Activated naive CD4-positive, alpha-beta T cell treated with anti-CD3 and anti-CD28 coated beads, Interleukin-2, amount 10 ng/mL, durations not matched to agents 7 days and 5 days (primary cell): ENCODE measurements at regions of chr1 and their contacts with region 1.

Region 1: DNA sequence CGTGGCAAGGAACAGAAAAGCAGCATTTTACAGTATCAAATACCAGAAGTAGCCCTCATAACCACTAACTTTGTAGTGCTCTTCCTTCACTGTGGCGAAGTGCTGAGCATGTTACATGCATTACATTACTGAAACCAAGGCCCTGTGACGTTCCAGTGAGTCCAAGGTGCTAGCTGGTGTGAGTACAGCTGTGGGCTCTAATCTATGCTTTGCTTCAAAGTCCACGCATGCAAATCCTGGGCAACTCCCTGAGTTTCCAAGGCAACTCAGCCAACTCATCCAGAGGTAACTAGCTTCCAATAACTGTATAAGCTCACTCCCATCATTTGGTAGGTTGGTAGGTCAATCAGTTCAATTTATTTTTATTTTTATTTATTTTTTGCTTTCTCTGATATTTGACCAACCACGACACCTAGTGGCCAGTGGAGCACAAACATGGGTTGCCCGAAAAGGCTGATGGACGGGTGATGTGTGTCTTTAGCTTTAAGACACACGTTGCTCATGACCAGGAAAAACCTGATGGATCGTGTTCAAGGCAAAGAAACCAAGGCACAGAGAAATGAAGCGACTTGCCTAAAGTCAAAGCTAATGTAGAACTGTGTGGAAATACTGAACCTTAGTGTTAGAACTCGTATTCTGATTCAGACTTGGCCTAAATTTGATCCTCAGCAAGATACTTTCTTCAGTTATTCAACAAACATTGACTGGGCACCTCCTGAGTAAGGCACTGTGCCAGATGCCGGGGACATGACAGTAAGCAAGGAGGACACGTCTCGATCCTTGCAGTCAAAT is 73.0 kb downstream of the GNG12 start:
- DNase-seq: peak; percentile 69
- H3K4me3 Mint-ChIP-seq: no peak overlapping the region
- H3K27ac Mint-ChIP-seq: no peak overlapping the region
- H3K4me1 Mint-ChIP-seq: no peaks in the 10 kb centered on the region
- H3K27me3 Mint-ChIP-seq: peaks cover 23% of the 10 kb centered on the region

Region 2: DNA sequence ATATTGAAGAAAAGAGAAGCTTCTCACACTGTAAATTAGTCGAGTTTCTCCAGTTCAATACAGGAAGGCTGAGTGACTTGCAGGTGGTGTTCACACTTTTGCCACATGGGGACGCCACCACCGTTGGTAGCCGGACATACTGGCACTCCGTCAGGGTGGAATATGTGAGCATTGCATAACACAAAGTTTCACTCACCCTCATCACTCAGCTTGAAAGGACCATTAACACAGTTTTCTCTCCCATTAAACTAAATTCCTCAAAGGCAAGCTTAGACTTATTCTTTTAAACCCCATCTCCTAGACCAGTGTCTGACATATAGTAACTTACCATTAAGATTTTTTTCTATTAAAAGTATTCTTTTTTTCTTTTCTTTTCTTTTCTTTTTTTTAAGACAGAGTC is 224.8 kb before region 1 on chr1:
- CTCF ChIA-PET with region 1: interaction called, 86 read pairs
- DNase-seq: peak; percentile 66
- H3K4me3 Mint-ChIP-seq: no peak overlapping the region
- H3K27ac Mint-ChIP-seq: no peak overlapping the region
- H3K4me1 Mint-ChIP-seq: no peaks in the 10 kb centered on the region
- H3K27me3 Mint-ChIP-seq: peaks cover 6% of the 10 kb centered on the region

Region 3: GRCh38 chr1:67561704-67562113 is 198.5 kb before region 1 on chr1:
- CTCF ChIA-PET with region 1: interaction called, 158 read pairs
- DNase-seq: peak; percentile 91
- H3K4me3 Mint-ChIP-seq: no peak overlapping the region
- H3K27ac Mint-ChIP-seq: no peak overlapping the region
- H3K4me1 Mint-ChIP-seq: no peaks in the 10 kb centered on the region
- H3K27me3 Mint-ChIP-seq: peaks cover 14% of the 10 kb centered on the region

Region 4: GRCh38 chr1:67570473-67571143 is 189.6 kb before region 1 on chr1:
- CTCF ChIA-PET with region 1: interaction called, 20 read pairs
- DNase-seq: no peak
- H3K4me3 Mint-ChIP-seq: no peak overlapping the region
- H3K27ac Mint-ChIP-seq: no peak overlapping the region
- H3K4me1 Mint-ChIP-seq: no peaks in the 10 kb centered on the region
- H3K27me3 Mint-ChIP-seq: peaks cover 7% of the 10 kb centered on the region

Region 5: DNA sequence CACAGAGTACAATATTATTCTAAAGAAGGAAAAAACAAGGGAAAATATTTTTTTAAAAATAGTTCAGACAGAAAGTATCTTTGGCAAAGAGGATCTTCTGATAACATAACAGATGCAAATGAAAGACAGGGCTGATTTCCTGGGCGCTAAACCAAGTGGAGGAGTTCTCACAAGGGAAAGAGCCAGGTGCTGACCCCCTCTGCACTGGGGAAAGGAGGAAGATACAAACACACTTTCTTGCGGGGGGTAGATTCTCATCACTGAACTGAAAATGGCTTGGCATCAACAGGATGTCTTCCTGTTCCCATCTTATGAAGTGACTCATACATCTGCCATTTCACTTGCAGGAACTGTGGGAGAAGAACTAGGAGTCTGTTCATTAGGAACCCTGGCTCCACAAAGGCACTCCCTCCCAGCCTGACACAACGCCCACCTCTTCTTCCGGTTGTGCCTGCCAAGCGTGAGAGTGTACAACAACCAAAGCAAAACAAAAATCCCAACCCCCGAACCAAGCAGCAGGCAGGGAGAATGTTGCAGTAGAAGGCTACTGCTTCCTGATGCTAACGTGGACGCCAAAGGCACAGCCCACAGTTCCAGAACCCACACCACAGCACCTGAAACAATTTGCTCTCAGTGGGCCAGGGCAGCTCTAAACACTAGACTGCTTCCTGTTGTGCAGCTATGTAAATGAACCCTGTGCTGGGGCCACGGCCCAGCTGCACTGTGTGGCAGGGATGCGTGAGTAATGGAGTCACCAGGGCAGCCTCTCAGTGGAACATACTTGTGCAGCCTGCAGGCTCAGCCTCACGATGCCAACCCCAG is 24.2 kb before region 1 on chr1:
- CTCF ChIA-PET with region 1: interaction called, 16 read pairs
- DNase-seq: peak; percentile 68
- H3K4me3 Mint-ChIP-seq: peak overlapping the region; percentile 51
- H3K27ac Mint-ChIP-seq: peak overlapping the region; percentile 87
- H3K4me1 Mint-ChIP-seq: peaks cover 25% of the 10 kb centered on the region
- H3K27me3 Mint-ChIP-seq: peaks cover 8% of the 10 kb centered on the region

Region 6: DNA sequence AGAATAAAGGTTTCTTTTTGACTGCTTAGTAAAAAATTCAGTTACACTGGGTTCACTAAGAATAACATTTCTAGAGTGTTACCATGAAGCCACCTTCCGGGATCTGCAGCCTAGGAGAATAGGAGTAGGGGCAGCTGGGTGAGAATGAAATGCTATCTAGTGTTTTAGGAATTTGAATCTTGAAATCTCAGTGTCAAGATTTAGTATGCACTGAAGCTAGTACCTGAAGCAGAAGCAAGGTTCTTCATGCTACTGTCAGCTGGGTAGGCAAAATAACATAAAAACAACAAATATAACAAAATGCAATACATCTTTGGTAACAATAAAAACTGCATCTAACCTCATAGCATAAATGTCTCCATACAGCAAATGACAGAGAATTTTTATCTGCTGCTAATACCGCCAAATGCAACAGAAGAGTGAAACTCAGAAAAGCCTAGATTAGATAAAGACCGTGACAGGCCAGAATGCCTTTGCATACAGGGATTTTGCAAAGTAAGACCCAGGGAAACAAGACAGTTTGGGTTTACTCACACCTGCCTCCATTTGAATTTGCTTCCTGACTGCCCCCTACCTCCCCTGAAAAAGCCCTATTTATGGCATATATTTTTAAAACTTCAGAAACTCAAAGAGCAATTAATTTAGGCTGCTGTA is 17.0 kb before region 1 on chr1:
- CTCF ChIA-PET with region 1: interaction called, 16 read pairs
- DNase-seq: no peak
- H3K4me3 Mint-ChIP-seq: no peak overlapping the region
- H3K27ac Mint-ChIP-seq: no peak overlapping the region
- H3K4me1 Mint-ChIP-seq: peaks cover 10% of the 10 kb centered on the region
- H3K27me3 Mint-ChIP-seq: peaks cover 37% of the 10 kb centered on the region